MCF 10A (cell line): ENCODE measurements at regions of chr6 and their contacts with region 1.

Region 1: DNA sequence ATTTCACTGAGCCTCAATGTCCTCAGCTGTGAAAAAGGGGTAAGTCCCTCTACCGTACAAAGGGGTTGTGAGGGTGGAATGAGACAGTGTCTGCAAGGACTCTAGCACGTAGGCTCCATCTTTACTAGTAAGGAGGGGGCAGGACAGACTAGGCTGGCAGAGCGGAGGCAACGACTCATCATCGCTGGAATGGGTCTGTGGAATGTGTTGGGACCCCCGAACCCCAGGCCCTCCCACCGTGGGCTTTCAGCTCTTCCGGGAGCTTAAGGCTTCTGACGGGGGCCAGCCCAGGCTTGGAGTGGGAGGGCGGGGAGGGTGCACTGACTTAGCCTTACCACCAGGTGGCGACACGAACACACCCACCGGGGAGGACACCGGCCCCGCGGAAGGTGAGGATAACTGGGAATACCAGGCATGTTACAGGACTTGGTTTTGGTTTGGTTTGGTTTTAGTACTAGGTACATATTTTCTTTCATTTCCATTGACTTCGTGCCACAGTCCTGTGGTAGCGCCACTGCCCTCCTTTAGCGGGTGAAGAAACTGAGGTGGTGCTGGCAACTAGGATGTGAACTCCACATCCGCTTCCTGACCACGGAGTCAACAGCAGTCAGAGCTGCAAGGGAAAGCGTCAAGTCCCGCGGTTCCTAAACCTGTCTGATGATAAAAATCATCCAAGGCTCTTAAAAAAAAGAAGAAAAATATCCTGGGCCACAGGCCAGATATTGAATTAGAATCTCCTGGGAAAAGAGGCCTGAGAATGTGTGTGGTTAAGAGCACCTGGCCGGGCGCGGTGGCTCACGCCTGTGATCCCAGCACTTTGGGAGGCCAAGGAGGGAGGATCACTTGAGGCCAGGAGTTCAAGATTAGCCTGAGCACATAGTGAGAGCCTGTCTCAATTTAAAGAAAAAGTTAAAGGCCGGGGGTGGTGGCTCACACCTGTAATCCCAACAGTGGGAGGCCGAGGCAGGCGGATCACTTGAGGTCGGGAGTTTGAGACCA is 10.3 kb upstream of the TULP1 start:
- DNase-seq: peak; percentile 75
- H3K4me3 Mint-ChIP-seq: no peak overlapping the region
- H3K27ac Mint-ChIP-seq: no peak overlapping the region
- H3K4me1 Mint-ChIP-seq: peaks cover 6% of the 10 kb centered on the region
- H3K27me3 Mint-ChIP-seq: no peaks in the 10 kb centered on the region
- CTCF ChIP-seq: peak; percentile 98

Region 2: DNA sequence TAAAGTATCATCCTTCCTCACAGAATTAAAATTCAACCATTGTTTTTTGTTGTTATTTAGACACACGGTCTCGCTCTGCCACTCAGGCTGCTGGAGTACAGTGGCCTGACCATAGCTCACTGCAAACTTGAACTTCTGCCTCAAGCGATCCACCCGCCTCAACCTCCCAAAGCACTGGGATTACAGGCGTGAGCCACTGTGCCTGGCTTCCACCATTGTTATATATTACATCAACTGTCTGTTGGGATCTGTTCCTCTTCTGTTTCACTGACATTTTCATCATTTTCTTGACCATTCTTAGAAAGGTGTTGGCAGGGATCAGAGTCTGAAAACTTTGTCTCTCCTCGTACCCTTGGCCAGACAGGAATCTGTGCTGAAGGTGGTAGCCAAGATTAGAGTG is 11.0 kb after region 1 on chr6:
- CTCF ChIA-PET with region 1: interaction called, 12 read pairs
- POLR2A ChIA-PET with region 1: no interaction called
- intact Hi-C with region 1: no loop called
- DNase-seq: no peak
- H3K4me3 Mint-ChIP-seq: no peak overlapping the region
- H3K27ac Mint-ChIP-seq: no peak overlapping the region
- H3K4me1 Mint-ChIP-seq: no peaks in the 10 kb centered on the region
- H3K27me3 Mint-ChIP-seq: peaks cover 12% of the 10 kb centered on the region
- CTCF ChIP-seq: no peak

Region 3: GRCh38 chr6:35552285-35552917 is 29.4 kb after region 1 on chr6:
- CTCF ChIA-PET with region 1: interaction called, 35 read pairs
- POLR2A ChIA-PET with region 1: no interaction called
- intact Hi-C with region 1: loop called (anchors 1 kb)
- DNase-seq: no peak
- H3K4me3 Mint-ChIP-seq: no peak overlapping the region
- H3K27ac Mint-ChIP-seq: no peak overlapping the region
- H3K4me1 Mint-ChIP-seq: no peaks in the 10 kb centered on the region
- H3K27me3 Mint-ChIP-seq: no peaks in the 10 kb centered on the region
- CTCF ChIP-seq: peak; percentile 89

Region 4: GRCh38 chr6:35583893-35584688 is 61.1 kb after region 1 on chr6:
- CTCF ChIA-PET with region 1: no interaction called
- POLR2A ChIA-PET with region 1: no interaction called
- intact Hi-C with region 1: loop called (anchors 1 kb)
- DNase-seq: peak; percentile 82
- H3K4me3 Mint-ChIP-seq: no peak overlapping the region
- H3K27ac Mint-ChIP-seq: peak overlapping the region; percentile 75
- H3K4me1 Mint-ChIP-seq: peaks cover 40% of the 10 kb centered on the region
- H3K27me3 Mint-ChIP-seq: no peaks in the 10 kb centered on the region
- CTCF ChIP-seq: peak; percentile 65

Region 5: DNA sequence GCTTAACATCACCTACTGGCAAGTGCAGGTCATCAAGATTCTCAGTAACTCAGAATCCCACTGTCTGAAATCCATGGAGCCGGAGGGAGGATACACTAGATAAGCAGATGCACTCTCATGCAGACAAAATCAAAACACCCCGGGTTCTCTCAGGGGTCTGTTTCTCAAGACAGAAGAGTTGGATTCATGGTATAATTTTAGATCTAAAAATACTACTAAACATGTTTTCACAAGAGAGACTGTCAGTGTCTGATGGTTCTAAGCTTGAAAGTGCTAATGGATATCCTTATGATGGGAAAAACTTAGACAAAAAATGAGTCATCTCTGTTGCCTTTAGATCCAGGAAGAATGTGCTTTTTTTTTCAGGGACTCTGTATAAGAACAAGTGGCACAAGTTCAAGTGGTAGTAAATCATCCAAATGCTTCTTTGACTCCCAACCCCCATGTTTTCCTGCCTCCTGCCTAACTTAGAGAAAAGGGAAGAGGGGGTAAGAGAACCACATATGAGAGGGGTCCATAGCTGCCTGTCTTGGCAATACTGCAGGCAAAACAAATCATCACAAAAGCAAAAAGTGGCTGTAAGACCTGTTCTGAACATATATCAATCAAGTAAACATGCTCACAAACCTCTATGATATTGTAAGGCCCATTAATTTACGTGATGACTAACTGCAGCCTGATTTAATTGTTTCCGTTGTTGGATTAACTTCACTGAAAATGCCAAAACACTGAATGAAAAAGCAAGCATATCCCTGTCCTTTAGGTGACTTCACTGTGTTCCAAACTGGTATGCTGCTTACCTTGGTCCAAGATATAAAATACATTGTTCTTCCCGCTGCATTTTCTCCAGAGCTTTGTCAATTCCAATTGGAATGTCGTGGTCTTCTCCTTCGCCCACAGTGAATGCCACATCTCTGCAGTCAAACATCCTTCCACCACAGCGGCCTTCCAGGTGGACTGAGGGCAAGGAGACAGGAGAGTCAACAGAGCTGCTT is 73.8 kb after region 1 on chr6:
- CTCF ChIA-PET with region 1: no interaction called
- POLR2A ChIA-PET with region 1: no interaction called
- intact Hi-C with region 1: no loop called
- DNase-seq: peak; percentile 91
- H3K4me3 Mint-ChIP-seq: peak overlapping the region; percentile 12
- H3K27ac Mint-ChIP-seq: peak overlapping the region; percentile 85
- H3K4me1 Mint-ChIP-seq: peaks cover 46% of the 10 kb centered on the region
- H3K27me3 Mint-ChIP-seq: no peaks in the 10 kb centered on the region
- CTCF ChIP-seq: no peak

Region 6: DNA sequence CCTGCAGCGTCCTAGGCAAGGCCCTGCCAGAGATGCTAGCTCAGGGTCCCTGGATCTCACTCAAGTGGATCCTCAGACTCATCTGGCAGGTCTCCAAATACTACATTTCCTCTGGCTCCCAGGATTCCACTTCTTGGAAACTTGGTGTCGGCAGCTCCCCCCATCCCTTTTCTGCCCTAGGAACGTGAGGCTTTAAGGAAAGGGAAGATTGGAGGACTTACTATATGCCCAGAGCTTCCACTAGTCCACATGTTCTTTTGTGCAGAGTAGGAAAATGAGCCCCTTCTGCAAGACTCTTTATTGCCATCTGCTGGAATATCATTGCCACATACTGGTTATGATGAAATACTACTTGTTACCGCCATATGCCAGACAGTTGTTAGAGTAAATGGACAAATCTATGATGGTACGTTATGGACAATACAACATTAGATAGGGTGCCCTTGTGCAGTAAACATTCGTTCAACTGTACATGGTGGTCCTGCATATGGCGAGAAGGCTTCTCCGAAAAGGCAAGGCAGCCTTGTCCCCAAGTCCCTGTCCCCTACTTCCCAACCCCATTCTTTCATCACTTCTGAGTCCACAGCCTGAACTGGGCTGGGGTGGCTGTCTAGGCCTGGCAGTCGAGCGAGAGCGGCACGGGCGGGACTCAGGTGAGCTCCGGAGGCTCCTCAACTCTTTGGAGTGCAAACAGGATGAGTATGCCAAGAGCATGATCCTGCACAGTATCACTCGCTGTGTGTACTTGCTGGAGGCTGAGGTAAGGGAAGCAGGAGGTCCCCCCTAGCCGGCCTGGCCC is 214.7 kb after region 1 on chr6:
- CTCF ChIA-PET with region 1: interaction called, 90 read pairs
- POLR2A ChIA-PET with region 1: interaction called, 9 read pairs
- intact Hi-C with region 1: loop called (anchors 1 kb)
- DNase-seq: peak; percentile 80
- H3K4me3 Mint-ChIP-seq: no peak overlapping the region
- H3K27ac Mint-ChIP-seq: no peak overlapping the region
- H3K4me1 Mint-ChIP-seq: peaks cover 34% of the 10 kb centered on the region
- H3K27me3 Mint-ChIP-seq: no peaks in the 10 kb centered on the region
- CTCF ChIP-seq: peak; percentile 84